Right ventricle myocardium inferior (tissue), 1 donor: ENCODE measurements at regions of chr1 and their contacts with region 1.

Region 1: DNA sequence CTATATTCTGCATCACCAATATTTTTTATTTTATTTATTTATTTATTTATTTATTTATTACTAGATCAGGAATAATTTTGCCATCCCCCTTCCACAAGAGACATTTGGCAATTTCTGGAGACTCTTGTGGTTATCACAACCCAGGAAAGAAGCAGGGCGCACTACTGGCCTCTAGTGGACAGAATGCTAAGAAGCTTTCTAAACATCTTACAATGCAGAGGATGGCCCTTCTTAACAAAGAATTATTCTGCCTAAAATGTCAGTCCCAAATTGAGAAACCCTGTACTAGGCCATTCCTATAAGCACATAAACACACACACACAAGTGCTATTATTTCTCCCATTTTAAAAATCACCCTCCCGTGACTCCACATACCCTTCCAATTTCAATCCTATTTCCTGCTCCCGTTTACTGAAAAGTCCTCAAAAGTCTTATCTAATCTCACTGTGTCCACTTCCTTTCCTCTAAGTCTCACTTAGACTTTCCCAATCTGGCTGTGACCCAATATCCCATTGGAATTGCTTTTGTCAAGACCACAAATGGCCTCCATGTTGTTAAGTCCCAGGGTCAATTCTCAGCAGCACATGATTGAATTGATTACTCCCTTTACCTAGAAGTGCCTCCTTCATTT is 43.7 kb upstream of the RNF11 start:
- DNase-seq: peak; percentile 79
- ATAC-seq: peak; percentile 59

Region 2: DNA sequence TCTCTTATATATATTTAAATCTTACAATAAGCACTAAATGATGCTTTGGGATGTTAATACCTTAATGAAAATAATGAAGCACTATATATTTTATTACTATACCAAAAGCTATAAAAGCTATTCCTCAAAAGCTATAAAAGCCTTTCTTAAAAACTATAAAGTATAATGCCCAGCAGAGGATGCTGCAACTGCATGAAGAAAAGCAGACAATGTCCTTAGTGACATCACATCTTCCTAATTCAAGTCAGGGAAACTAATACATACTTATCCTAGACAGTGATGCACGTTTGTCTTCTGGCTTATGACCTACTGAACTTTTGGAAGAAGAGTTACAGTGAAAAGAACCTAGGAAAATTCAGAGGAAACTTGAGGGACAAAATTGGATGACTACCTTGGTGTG is 103.8 kb before region 1 on chr1:
- intact Hi-C with region 1: no loop called
- DNase-seq: no peak
- ATAC-seq: no peak

Region 3: DNA sequence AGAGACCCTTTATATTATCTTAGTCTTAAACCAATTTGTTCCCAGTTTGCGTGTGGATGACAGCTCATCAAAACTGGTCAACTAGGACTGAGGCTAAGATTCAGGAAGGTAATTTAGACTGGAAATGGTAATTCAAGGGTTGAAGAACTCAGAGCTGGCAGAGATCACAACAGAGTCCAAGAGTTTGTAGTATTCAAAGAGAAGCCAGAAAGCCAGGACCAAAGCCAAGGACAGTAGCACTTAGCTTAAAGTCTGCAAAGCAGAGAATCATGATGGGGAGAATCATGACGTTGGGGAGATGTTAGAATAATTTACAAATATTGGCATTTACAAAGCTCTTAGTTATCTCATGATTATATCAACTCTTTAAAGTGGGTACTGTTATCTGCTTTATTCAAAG is 76.3 kb after region 1 on chr1:
- intact Hi-C with region 1: no loop called
- DNase-seq: no peak
- ATAC-seq: no peak

Region 4: DNA sequence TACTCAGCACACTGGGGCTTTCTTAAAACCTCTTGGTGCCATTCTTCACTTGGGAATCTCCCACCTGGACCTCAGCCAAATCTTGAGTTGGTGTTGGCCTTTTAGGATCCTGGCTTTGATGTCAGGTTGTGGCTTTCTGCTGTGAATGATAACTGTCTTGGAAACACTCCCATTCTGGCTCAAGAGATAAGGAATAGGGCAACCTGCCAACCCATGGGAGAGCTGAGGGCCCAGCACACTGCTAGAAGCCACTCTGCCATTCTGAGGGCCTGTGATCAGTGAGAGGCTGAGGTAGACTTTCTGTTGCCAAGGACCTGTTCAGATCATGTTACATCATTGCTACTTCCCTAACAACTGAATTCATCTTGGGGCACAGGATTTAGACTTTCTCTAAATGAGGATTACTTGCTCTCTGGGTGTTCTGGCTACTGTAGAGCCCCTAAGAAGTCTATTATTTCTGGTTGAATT is 92.2 kb after region 1 on chr1:
- intact Hi-C with region 1: loop called (anchors 10 kb)
- DNase-seq: no peak
- ATAC-seq: peak; percentile 71

Region 5: DNA sequence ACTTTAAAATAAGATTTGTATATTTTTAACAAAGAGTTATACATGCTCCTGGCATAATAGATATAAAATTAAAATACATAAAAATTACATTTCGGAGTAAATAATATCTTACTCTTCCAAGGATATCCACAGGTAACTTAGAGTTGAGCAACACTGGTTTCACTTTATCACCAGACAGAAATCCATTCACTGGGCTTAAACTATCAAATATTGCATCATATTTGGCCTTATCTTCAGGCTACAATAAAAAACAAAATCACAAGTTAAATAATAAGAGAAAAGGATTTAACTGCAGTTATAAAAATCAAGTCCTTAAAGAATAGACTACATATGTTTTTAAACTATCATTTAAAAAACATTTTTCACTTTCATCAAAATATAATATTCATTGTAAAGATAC is 271.2 kb after region 1 on chr1:
- intact Hi-C with region 1: no loop called
- DNase-seq: no peak
- ATAC-seq: no peak